Naive thymus-derived CD4-positive, alpha-beta T cell (primary cell): ENCODE measurements at regions of chr3 and their contacts with region 1.

Region 1: GRCh38 chr3:188954590-188955208 is 217.1 kb upstream of the TPRG1 start:
- DNase-seq: peak; percentile 35 to 80 (median 63)
- ATAC-seq: peak; percentile 83
- H3K4me3 ChIP-seq: no peak overlapping the region
- H3K4me3 Mint-ChIP-seq: no peak overlapping the region
- H3K27ac ChIP-seq: no peak overlapping the region
- H3K27ac Mint-ChIP-seq: no peak overlapping the region
- H3K4me1 ChIP-seq: no peaks in the 10 kb centered on the region
- H3K4me1 Mint-ChIP-seq: peaks cover 0 to 30% (median 0%) of the 10 kb centered on the region in 7 donors
- H3K27me3 ChIP-seq: no peaks in the 10 kb centered on the region
- H3K27me3 Mint-ChIP-seq: peaks cover 0 to 5% (median 0%) of the 10 kb centered on the region in 5 donors

Region 2: DNA sequence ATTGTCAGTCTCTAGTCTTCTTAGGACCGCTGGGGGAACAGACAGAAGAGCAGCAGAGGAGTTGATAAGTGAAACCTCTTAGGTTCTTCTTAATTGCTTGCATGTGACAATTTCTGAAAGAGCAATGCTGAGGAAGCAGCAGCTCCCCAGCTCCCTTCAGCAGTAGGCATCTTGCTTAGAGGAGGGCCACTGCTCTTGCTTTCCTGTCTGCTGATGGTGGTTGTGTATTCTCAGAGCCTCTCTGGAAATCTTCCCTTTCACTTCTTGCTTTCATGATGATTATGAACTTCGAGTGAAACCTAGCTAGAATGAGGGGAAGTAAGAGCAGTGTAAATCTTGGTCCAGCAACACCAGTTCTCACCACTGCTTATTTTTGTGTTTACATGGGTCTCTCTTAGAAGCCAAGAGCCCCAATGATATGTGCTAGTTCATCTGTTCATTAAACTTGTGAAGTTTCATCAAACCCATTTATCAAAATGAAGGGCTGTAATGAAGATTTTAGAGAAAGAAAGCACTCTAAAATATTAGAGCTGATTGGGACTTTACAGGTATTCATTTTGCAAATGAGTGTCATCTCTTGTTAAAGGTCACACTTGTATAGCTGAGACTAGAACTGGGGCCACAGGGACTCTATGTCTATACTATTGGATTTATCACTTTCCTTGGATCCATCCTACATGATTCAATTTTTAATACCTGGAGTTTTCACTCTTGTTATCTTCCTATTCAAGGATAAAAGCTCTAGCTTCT is 554.0 kb before region 1 on chr3:
- CTCF ChIA-PET with region 1: interaction called, 3 read pairs
- POLR2A ChIA-PET with region 1: no interaction called
- intact Hi-C with region 1: loop called in 1 of 2 experiments (anchors 10 kb)
- DNase-seq: no peak
- ATAC-seq: peak; percentile 75
- H3K4me3 ChIP-seq: no peak overlapping the region
- H3K4me3 Mint-ChIP-seq: peak overlapping the region in 1 of 10 donors; percentile 42
- H3K27ac ChIP-seq: no peak overlapping the region
- H3K27ac Mint-ChIP-seq: peak overlapping the region in 2 of 9 donors; percentile 58 to 69
- H3K4me1 ChIP-seq: peaks cover 0 to 4% of the 10 kb centered on the region in 2 donors
- H3K4me1 Mint-ChIP-seq: peaks cover 28 to 63% (median 49%) of the 10 kb centered on the region in 7 donors
- H3K27me3 ChIP-seq: no peaks in the 10 kb centered on the region
- H3K27me3 Mint-ChIP-seq: no peaks in the 10 kb centered on the region

Region 3: DNA sequence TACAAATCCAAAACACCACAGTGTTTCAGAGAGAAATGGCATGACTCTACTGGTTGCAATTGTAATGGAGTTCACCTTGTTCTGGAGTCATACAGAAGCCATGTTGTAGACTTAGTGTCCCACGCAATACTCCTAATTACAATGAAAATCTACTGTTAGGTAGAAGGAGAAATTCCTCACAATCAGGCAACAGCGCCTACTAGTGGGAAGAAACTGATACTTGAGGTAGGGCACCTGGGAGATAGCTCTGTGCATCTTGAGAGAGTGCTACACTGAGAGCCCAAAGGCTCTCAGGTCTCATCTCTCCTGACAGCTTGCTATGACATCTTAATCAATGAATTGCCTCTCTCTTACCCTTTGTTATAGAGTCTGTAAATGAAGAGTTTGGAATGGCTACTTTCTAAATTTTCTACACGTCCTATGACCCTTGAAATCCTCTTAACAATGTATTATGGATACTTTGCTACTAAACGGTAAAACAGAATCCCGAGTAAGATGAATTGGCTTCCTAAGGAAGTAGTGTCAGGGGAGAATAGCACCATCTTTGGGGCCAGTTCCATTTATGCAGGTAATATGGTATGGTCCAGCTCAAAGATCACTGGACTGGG is 205.6 kb before region 1 on chr3:
- CTCF ChIA-PET with region 1: interaction called, 3 read pairs
- POLR2A ChIA-PET with region 1: no interaction called
- intact Hi-C with region 1: loop called (anchors 1 to 2 kb)
- DNase-seq: peak in 8 of 9 donors; percentile 25 to 62 (median 46)
- ATAC-seq: peak; percentile 82
- H3K4me3 ChIP-seq: no peak overlapping the region
- H3K4me3 Mint-ChIP-seq: no peak overlapping the region
- H3K27ac ChIP-seq: no peak overlapping the region
- H3K27ac Mint-ChIP-seq: no peak overlapping the region
- H3K4me1 ChIP-seq: no peaks in the 10 kb centered on the region
- H3K4me1 Mint-ChIP-seq: peaks cover 0 to 17% (median 0%) of the 10 kb centered on the region in 7 donors
- H3K27me3 ChIP-seq: no peaks in the 10 kb centered on the region
- H3K27me3 Mint-ChIP-seq: no peaks in the 10 kb centered on the region

Region 4: DNA sequence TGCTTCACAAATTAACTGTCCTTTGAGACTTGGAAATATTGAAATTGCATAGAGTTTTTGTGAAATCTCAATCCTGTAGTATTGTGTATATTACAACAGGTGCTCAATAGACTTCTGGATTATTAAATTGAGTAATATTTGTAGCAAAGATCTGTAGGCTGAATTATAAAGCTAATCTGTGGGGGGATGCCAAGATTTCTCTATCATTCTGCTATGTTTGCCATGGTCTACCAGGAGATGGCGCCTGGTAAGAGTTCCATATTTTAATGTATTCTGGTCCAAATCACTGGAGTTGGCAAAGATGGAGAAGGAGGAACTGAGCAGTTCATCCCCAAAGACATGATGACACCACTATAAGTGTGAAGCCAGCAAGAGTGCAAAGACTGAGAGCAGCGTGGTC is 123.8 kb before region 1 on chr3:
- CTCF ChIA-PET with region 1: no interaction called
- POLR2A ChIA-PET with region 1: no interaction called
- intact Hi-C with region 1: loop called (anchors 1 kb)
- DNase-seq: no peak
- ATAC-seq: peak; percentile 59
- H3K4me3 ChIP-seq: no peak overlapping the region
- H3K4me3 Mint-ChIP-seq: no peak overlapping the region
- H3K27ac ChIP-seq: no peak overlapping the region
- H3K27ac Mint-ChIP-seq: no peak overlapping the region
- H3K4me1 ChIP-seq: peaks cover 0 to 9% of the 10 kb centered on the region in 2 donors
- H3K4me1 Mint-ChIP-seq: peaks cover 6 to 24% (median 18%) of the 10 kb centered on the region in 7 donors
- H3K27me3 ChIP-seq: no peaks in the 10 kb centered on the region
- H3K27me3 Mint-ChIP-seq: no peaks in the 10 kb centered on the region

Region 5: GRCh38 chr3:188875413-188875812 is 79.3 kb before region 1 on chr3:
- CTCF ChIA-PET with region 1: no interaction called
- POLR2A ChIA-PET with region 1: interaction called, 3 read pairs
- intact Hi-C with region 1: loop called in 1 of 2 experiments (anchors 5 kb)
- DNase-seq: no peak
- ATAC-seq: no peak
- H3K4me3 ChIP-seq: no peak overlapping the region
- H3K4me3 Mint-ChIP-seq: no peak overlapping the region
- H3K27ac ChIP-seq: no peak overlapping the region
- H3K27ac Mint-ChIP-seq: no peak overlapping the region
- H3K4me1 ChIP-seq: no peaks in the 10 kb centered on the region
- H3K4me1 Mint-ChIP-seq: no peaks in the 10 kb centered on the region
- H3K27me3 ChIP-seq: no peaks in the 10 kb centered on the region
- H3K27me3 Mint-ChIP-seq: no peaks in the 10 kb centered on the region

Region 6: DNA sequence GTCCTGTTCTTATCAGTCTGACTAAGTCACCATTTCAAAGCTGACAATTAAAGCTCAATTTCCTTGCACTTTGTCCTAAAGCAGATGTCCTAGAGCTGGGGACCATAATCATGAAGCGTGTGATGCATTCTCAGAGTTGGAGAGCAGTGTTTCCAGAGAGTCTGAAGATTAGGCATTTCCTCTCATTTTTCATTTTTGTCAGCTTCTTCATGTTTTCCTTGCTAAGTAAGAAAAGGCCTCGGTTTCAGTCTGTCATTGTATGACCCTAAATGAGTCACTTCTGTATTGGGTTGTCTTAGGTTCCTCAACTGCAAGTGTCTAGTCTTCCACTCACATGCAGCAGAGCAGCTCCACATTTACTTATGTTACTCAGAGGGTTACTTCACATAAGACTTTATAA is 40.1 kb before region 1 on chr3:
- CTCF ChIA-PET with region 1: interaction called, 4 read pairs
- POLR2A ChIA-PET with region 1: no interaction called
- intact Hi-C with region 1: loop called in 1 of 2 experiments (anchors 2 kb)
- DNase-seq: no peak
- ATAC-seq: peak; percentile 70
- H3K4me3 ChIP-seq: no peak overlapping the region
- H3K4me3 Mint-ChIP-seq: peak overlapping the region in 1 of 10 donors; percentile 41
- H3K27ac ChIP-seq: no peak overlapping the region
- H3K27ac Mint-ChIP-seq: peak overlapping the region in 2 of 9 donors; percentile 28 to 34
- H3K4me1 ChIP-seq: peaks cover 16 to 18% of the 10 kb centered on the region in 2 donors
- H3K4me1 Mint-ChIP-seq: peaks cover 21 to 42% (median 32%) of the 10 kb centered on the region in 7 donors
- H3K27me3 ChIP-seq: no peaks in the 10 kb centered on the region
- H3K27me3 Mint-ChIP-seq: no peaks in the 10 kb centered on the region